A549 (cell line): ENCODE measurements at regions of chr5 and their contacts with region 1.

Region 1: DNA sequence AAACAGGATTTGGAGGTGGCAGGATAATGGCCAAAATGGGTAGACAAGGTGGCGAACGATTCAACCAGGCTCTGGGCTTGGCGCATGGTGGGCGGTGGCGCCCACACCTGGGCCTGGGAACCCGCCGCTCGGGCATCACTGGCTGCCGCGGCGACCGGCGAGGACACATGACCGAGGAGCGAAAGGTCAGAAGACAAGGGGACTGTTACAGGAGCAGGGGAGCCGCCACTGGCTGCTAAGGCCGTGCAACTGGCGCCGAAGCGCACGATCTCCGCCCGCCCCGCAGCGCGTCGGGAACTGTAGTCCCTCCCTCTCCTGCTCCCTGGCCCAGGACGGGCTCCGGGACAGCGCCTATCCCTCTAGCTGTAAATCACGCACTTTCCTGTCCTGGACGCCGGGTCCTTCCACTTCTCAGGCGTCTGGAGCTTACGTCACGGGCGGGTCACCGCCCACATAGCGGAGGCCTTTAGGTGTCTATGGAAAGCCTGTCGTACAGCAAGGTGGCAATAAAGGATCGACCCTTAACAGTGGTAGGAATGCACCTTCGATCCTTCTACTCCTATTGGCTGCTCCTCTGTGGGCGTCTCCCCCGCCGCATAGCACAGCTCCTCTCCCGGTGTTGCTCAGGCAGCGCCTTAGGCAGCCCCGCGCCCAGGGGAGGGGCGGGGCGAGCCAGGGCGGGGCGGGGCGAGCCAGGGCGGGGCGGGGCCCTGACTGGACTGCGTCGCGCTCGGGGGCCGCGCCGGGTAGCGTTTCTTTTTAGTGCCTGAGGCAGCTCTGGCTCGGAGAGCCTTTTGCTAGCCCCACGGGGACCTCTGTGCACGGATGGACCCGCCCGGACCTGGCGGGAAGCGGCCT is at the start of gene ICE1:
- DNase-seq: peak; percentile 88 to 99
- ATAC-seq: peak; percentile 94 to 98
- H3K4me3 ChIP-seq: peak within 1 kb of the TSS; percentile 95
- H3K27ac ChIP-seq: peak within 1 kb of the TSS; percentile 87 to 88
- H3K4me1 ChIP-seq: peaks cover 18% of the 10 kb centered on the region; the same call in 2 of the 3 replicates
- CTCF ChIP-seq: no peak
- EP300 ChIP-seq: no peak
- POLR2A ChIP-seq: peak; percentile 95
- RAD21 ChIP-seq: no peak
- polyA plus RNA-seq, gene ICE1: 29.1 and 33.1 TPM in 2 replicates

Region 2: DNA sequence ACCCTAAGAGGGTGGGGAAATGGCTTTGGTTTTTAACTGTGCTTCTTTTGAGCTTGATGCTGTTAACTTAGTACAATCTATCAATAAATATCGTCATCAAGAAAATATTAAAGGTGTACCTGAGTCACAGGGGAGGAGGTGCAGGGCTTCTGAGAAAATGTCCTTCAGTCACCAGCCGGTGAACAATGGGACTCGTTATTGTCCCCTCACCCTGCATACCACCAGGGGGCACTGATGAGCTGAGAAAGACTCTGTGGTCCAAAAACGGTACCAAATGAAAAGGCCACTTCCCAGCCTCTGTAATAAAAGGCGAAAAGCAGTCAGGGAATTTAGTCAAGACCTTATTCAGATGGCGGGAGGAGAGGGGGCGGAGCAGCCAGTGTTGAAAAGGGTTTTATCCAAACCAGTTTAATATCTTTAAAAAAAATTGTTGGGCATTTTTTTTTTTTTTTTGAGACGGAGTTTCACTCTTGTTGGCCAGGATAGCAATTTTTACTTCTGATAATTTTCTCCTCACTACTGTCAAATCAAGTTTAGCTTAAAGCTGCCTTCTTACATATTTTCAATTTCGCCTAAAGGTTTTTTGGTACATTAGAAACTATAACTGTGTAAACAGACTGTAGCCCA is 554.0 kb before region 1 on chr5:
- CTCF ChIA-PET with region 1: interaction called, 234 read pairs
- POLR2A ChIA-PET with region 1: interaction called, 3 read pairs
- DNase-seq: peak; percentile 52 to 76
- ATAC-seq: peak; percentile 82 to 89
- H3K4me3 ChIP-seq: no peak overlapping the region
- H3K27ac ChIP-seq: no peak overlapping the region
- H3K4me1 ChIP-seq: no peaks in the 10 kb centered on the region
- CTCF ChIP-seq: peak; percentile 69
- EP300 ChIP-seq: no peak
- POLR2A ChIP-seq: no peak
- RAD21 ChIP-seq: peak; percentile 68 to 75

Region 3: DNA sequence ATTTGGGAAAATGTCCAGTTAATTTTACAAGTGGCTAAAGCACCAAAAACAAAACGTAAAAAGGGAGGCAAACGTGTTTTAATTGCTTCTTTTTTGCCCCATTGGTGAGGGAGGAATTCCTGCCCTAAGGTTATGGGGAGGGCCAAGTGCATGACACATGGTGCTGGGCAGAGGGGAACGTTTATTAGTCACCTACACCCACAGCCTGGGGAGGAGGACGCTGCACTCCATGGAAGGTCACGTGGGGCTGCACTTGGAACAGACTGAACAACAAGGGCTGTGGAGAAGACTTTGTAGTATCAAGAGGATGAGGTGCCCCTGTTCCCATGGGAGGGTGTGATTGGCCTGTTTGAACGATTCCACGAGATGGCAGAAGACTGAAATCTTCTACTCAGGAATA is 295.7 kb before region 1 on chr5:
- CTCF ChIA-PET with region 1: interaction called, 18 read pairs
- POLR2A ChIA-PET with region 1: no interaction called
- DNase-seq: peak; percentile 37 to 69
- ATAC-seq: peak; percentile 97 to 98
- H3K4me3 ChIP-seq: no peak overlapping the region
- H3K27ac ChIP-seq: no peak overlapping the region
- H3K4me1 ChIP-seq: peaks cover 10% of the 10 kb centered on the region
- CTCF ChIP-seq: no peak
- EP300 ChIP-seq: no peak
- POLR2A ChIP-seq: no peak
- RAD21 ChIP-seq: no peak

Region 4: DNA sequence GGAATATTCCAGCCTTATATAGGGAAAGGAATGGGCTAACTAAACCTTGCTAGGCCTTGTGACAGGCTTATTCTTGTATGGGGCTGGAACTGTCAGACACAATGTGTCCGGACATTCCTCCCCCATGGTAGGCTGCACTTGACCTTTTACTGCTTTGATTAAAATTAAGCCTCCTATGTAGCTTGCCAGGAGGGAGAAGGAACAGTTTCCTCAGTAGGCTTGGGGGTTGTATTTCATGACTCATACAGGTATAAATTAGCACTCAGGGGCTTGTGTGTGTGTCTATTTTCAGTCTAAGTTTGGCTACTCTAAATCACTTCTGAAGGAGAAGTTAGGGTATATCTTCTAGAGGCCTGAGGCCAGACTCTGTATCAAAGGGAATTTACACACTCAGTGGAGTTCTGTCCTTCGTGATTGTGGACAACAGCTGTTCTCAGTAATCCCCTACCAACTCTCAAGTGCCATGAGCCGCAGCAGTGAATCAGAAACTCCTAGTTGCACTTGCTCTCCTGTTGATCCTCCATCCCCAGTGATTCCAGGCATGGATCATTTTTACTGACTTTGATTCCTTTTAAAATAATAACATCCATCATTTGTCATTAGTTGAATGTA is 265.6 kb before region 1 on chr5:
- CTCF ChIA-PET with region 1: no interaction called
- POLR2A ChIA-PET with region 1: no interaction called
- DNase-seq: no peak
- ATAC-seq: no peak
- H3K4me3 ChIP-seq: no peak overlapping the region
- H3K27ac ChIP-seq: no peak overlapping the region
- H3K4me1 ChIP-seq: peaks cover 13% of the 10 kb centered on the region; the same call in 2 of the 3 replicates
- CTCF ChIP-seq: no peak
- EP300 ChIP-seq: no peak
- POLR2A ChIP-seq: no peak
- RAD21 ChIP-seq: no peak

Region 5: DNA sequence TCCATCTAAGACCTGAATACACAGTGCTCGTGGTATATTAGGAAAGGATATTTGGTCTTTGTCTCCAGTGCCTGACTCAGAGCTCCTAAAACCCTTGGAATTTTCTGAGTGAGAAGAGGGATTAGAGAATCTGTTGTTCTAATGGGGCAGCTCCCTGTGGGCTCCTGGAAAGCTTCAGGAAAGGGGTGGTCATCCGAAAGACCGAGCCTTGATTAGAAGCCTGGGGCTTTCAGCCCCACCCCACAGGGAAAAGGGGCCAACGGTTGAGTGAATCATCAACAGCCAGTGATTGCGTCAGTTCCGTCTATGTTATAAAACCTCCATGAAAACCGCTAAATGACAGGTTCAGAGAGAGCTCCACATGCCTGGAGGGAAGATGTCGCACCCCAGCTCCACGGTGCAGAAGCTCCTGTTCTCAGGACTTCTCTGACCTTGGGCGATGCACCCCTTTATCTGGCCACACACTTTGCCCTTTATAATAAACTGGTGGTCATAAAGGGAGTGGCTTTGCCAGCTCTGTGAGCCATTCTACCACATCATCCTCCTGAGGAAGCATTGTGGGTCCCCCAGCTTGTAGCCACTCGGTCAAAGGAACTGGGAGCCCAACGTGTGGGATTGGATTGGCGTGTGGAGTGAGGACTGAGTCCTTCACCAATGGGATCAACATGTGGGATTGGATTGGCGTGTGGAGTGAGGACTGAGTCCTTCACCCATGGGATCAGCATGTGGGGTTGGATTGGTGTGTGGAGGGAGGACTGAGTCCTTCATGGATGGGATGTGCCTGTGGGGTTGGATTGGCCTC is 70.7 kb before region 1 on chr5:
- CTCF ChIA-PET with region 1: interaction called, 12 read pairs
- POLR2A ChIA-PET with region 1: no interaction called
- DNase-seq: peak; percentile 58 to 76
- ATAC-seq: peak; percentile 65 to 76; a peak in 5 of 6 replicates
- H3K4me3 ChIP-seq: no peak overlapping the region
- H3K27ac ChIP-seq: peak overlapping the region; percentile 78 to 88
- H3K4me1 ChIP-seq: peaks cover 29% of the 10 kb centered on the region
- CTCF ChIP-seq: no peak
- EP300 ChIP-seq: peak; percentile 13 to 67; a peak in 3 of 5 replicates
- POLR2A ChIP-seq: no peak
- RAD21 ChIP-seq: peak in 1 of 2 experiments; percentile 4; a peak in 2 of 5 replicates

Region 6: GRCh38 chr5:5398046-5398445 is 24.1 kb before region 1 on chr5:
- CTCF ChIA-PET with region 1: interaction called, 13 read pairs
- POLR2A ChIA-PET with region 1: interaction called, 4 read pairs
- DNase-seq: no peak
- ATAC-seq: no peak
- H3K4me3 ChIP-seq: no peak overlapping the region
- H3K27ac ChIP-seq: no peak overlapping the region
- H3K4me1 ChIP-seq: no peaks in the 10 kb centered on the region
- CTCF ChIP-seq: no peak
- EP300 ChIP-seq: no peak
- POLR2A ChIP-seq: no peak
- RAD21 ChIP-seq: no peak